PC-9 (cell line): ENCODE measurements at regions of chr12 and their contacts with region 1.

Region 1: GRCh38 chr12:18261253-18261652 is at the start of gene PIK3C2G:
- DNase-seq: peak; percentile 37 to 62
- H3K4me3 ChIP-seq: peak within 1 kb of the TSS; percentile 8; the same call in 1 of the 2 replicates
- H3K27ac ChIP-seq: no peak within 1 kb of the TSS
- H3K4me1 ChIP-seq: 0 out of 2 replicates have a peak, but pooled peaks cover 9% of the 10 kb centered on the region
- H3K27me3 ChIP-seq: no peaks in the 10 kb centered on the region
- CTCF ChIP-seq: no peak
- total RNA-seq, gene PIK3C2G: 0.30 and 1.4 TPM in 2 replicates

Region 2: GRCh38 chr12:18217966-18218365 is 43.3 kb before region 1 on chr12:
- CTCF ChIA-PET with region 1: no interaction called
- POLR2A ChIA-PET with region 1: no interaction called
- intact Hi-C with region 1: no loop called
- DNase-seq: no peak
- H3K4me3 ChIP-seq: no peak overlapping the region
- H3K27ac ChIP-seq: no peak overlapping the region
- H3K4me1 ChIP-seq: no peaks in the 10 kb centered on the region
- H3K27me3 ChIP-seq: no peaks in the 10 kb centered on the region
- CTCF ChIP-seq: no peak

Region 3: DNA sequence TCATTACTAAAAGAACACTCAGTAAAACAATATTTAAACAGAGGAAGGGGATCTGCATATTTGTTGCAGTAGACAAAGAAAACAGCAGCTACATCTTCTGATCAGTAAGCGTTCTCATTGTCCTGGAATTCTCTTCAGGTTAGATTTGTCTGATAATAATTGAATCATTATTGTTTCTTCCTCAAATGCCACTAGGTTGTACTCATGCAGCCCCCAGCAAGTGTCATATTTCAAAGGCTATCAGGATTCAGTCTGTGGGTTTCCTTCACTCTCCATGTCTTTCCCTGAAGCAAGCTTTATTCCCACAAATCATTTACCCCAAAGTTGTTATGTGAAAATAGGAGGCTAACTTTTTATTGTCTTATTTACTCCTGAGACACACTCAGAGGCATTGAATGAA is 14.7 kb after region 1 on chr12:
- CTCF ChIA-PET with region 1: no interaction called
- POLR2A ChIA-PET with region 1: no interaction called
- intact Hi-C with region 1: loop called (anchors 1 kb)
- DNase-seq: peak; percentile 32 to 45
- H3K4me3 ChIP-seq: no peak overlapping the region
- H3K27ac ChIP-seq: no peak overlapping the region
- H3K4me1 ChIP-seq: peaks cover 10% of the 10 kb centered on the region; the same call in 1 of the 2 replicates
- H3K27me3 ChIP-seq: no peaks in the 10 kb centered on the region
- CTCF ChIP-seq: no peak

Region 4: GRCh38 chr12:18320036-18320617 is 58.9 kb after region 1 on chr12:
- CTCF ChIA-PET with region 1: interaction called, 11 read pairs
- POLR2A ChIA-PET with region 1: no interaction called
- intact Hi-C with region 1: no loop called
- DNase-seq: peak; percentile 50 to 68
- H3K4me3 ChIP-seq: no peak overlapping the region
- H3K27ac ChIP-seq: no peak overlapping the region
- H3K4me1 ChIP-seq: 0 out of 2 replicates have a peak, but pooled peaks cover 6% of the 10 kb centered on the region
- H3K27me3 ChIP-seq: no peaks in the 10 kb centered on the region
- CTCF ChIP-seq: peak; percentile 59

Region 5: DNA sequence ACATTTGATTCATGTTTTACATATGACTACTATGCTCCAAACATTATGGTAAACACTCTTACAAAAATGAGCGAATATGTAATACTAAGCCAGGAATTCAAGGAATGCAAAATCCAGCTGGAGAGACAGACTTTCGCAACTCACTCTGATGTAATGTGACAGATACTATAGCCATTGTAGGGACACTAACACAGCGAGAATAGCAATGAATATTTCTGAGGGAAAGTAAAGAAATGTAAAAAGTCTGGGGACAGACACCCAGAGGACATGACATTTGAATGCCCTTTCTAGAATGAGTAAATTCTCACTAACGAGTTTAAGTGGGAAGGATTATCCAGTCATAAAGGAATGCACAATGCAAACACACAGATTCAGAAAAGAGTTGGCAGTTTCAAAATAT is 122.0 kb after region 1 on chr12:
- CTCF ChIA-PET with region 1: no interaction called
- POLR2A ChIA-PET with region 1: no interaction called
- intact Hi-C with region 1: loop called (anchors 2 kb)
- DNase-seq: peak; percentile 37 to 64
- H3K4me3 ChIP-seq: no peak overlapping the region
- H3K27ac ChIP-seq: peak overlapping the region; percentile 45
- H3K4me1 ChIP-seq: peaks cover 13% of the 10 kb centered on the region; the same call in 1 of the 2 replicates
- H3K27me3 ChIP-seq: no peaks in the 10 kb centered on the region
- CTCF ChIP-seq: no peak

Region 6: DNA sequence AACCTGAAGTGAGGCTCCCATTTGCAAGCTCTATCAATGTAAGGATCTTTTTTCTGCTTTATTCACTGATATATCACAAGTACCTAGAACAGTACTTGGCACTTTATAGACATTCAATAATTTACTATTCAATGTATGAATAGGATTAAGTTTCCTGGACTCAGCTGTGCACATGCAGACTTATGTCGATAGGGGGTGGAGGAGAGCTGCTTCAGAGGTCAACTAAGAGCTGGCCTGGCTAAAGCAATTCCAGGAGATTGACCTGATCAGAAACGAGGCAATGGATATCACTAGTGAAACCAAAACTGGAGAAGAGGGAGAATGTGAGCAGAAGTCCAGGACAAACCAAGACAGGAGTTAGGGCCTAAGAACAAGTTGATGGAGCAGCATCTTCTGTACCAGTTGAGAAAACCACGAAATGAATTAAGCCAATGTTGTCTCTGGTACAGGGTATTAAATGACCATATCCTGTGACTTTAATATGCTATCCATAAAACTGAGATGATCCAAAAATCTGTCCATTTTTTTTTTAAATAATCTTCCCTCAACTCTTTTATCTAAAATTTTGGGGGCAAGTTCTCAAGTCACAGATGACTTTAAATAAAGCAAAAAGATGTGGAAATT is 169.3 kb after region 1 on chr12:
- CTCF ChIA-PET with region 1: interaction called, 3 read pairs
- POLR2A ChIA-PET with region 1: no interaction called
- intact Hi-C with region 1: loop called (anchors 2 kb)
- DNase-seq: peak in 1 of 2 experiments; percentile 39
- H3K4me3 ChIP-seq: no peak overlapping the region
- H3K27ac ChIP-seq: no peak overlapping the region
- H3K4me1 ChIP-seq: peaks cover 3% of the 10 kb centered on the region
- H3K27me3 ChIP-seq: no peaks in the 10 kb centered on the region
- CTCF ChIP-seq: peak; percentile 84

Region 7: DNA sequence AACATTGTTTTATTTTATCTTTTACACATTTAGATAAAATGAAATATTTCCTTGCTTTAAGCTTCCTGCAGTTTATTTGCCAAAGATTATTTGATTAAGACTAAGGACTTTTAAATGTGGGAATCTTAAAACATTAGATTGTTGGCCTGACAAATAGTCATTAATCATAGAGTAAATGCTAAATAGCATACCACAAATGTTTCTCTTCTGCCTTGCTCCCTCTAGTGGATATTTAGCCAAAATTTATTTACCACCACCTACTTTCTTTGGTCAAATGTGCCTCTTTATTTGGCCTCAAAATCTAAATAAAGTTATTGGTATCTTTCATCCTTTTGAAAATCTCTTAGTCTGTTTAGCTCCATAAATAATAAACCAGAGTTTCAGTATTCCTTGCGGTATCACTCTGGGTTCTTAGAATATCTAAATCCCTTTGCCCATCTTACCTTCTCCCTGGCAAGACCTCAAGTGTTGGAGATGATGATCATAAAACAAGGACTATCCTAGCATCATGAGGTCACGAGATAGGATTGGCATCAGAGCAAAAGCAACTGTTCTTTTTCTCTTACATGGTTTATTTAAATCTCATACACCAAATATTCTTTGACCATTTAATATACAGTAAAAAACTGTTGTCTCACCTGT is 1027.5 kb after region 1 on chr12:
- CTCF ChIA-PET with region 1: no interaction called
- POLR2A ChIA-PET with region 1: no interaction called
- intact Hi-C with region 1: loop called (anchors 5 kb)
- DNase-seq: peak in 1 of 2 experiments; percentile 40
- H3K4me3 ChIP-seq: no peak overlapping the region
- H3K27ac ChIP-seq: no peak overlapping the region
- H3K4me1 ChIP-seq: no peaks in the 10 kb centered on the region
- H3K27me3 ChIP-seq: no peaks in the 10 kb centered on the region
- CTCF ChIP-seq: peak; percentile 73

Region 8: DNA sequence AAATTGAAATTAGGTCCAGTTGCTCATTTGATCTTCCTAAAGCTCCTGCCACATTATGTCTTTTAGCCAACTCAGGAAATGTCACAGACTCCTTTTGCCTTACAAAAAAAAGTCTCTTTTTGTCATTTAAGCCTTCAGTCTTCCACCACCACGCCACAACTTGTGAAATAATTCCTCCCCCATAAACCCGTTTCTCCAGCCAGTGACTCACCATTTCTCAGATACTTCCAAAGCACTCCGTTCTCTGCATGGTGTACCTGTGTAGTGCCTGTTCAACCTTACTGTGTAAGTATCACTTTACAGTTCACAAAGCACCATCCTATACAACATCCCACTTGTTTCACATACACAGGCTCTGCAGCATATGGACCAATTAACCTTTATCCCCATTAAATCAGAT is 1038.5 kb after region 1 on chr12:
- CTCF ChIA-PET with region 1: no interaction called
- POLR2A ChIA-PET with region 1: interaction called, 10 read pairs
- intact Hi-C with region 1: no loop called
- DNase-seq: peak; percentile 75 to 87
- H3K4me3 ChIP-seq: 0 out of 2 replicates have a peak overlapping the region, but pooled peaks have one; percentile 7
- H3K27ac ChIP-seq: peak overlapping the region; percentile 63
- H3K4me1 ChIP-seq: peaks cover 22% of the 10 kb centered on the region
- H3K27me3 ChIP-seq: no peaks in the 10 kb centered on the region
- CTCF ChIP-seq: no peak